PC-9 (cell line): ENCODE measurements at regions of chr3 and their contacts with region 1.

Region 1: GRCh38 chr3:169624533-169624972 is 39.0 kb downstream of the MECOM start:
- DNase-seq: no peak
- H3K4me3 ChIP-seq: no peak overlapping the region
- H3K27ac ChIP-seq: no peak overlapping the region
- H3K4me1 ChIP-seq: no peaks in the 10 kb centered on the region
- H3K27me3 ChIP-seq: no peaks in the 10 kb centered on the region
- CTCF ChIP-seq: no peak

Region 2: DNA sequence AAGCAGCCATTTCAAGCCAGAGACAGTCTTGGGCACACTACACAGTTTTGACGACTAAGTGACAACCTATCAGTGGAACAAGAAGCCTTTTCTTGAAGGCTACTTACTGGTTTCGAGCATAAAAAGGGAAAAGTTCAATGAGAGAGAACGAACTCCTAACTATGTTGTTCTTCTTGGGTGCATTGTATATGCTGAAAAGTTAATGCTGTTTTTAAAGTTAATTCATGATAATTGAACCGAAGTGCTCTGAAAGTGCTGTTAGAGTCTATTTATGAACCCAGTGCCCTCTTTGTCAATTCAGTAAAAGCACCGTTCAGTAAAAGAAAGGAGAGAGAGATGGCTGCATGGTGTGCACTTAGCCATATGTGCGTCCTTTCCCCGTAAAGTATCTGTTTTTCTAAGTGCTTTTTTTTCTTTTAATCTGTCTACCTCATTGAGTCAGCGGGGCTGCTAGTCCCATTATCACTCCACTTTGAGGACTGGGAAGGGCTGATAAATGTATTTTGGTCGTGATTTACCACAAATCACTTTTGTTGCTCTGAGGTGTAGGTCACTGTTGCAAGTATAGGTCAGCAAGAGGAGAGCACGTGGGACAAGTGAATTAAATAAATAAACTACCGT is 1148.1 kb before region 1 on chr3:
- CTCF ChIA-PET with region 1: interaction called, 13 read pairs
- POLR2A ChIA-PET with region 1: no interaction called
- intact Hi-C with region 1: no loop called
- DNase-seq: no peak
- H3K4me3 ChIP-seq: no peak overlapping the region
- H3K27ac ChIP-seq: no peak overlapping the region
- H3K4me1 ChIP-seq: no peaks in the 10 kb centered on the region
- H3K27me3 ChIP-seq: no peaks in the 10 kb centered on the region
- CTCF ChIP-seq: no peak